Activated CD8-positive, alpha-beta T cell treated with anti-CD3 and anti-CD28 coated beads for 36 hours (primary cell): ENCODE measurements at regions of chr12 and their contacts with region 1.

Region 1: GRCh38 chr12:92145731-92146496 is at the start of gene BTG1:
- DNase-seq: peak; percentile 99
- ATAC-seq: peak; percentile 83
- H3K4me3 Mint-ChIP-seq: peak within 1 kb of the TSS; percentile 97
- H3K27ac Mint-ChIP-seq: peak within 1 kb of the TSS; percentile 95
- H3K4me1 Mint-ChIP-seq: peaks cover 21% of the 10 kb centered on the region
- H3K27me3 Mint-ChIP-seq: no peaks in the 10 kb centered on the region
- CTCF ChIP-seq: no peak
- total RNA-seq, gene BTG1: 197 to 200 TPM

Region 2: DNA sequence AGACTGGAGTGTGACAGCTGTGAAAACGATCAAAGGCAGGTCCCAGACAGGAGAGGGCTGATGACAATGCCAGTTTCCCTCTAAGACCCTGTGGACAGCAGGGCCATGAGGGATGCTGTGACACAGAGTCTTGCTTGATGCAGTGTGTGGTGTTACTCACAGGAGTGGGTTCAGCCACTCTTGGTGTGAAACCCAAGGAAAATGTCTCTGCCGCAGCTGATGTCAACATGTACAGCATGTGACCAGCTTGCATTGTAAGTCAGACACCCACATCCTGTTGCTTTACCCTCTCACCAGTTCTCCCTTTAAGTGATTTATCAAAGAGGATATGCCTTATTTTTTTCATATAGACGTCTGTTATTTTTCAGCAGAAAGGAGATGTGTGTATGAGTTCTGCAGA is 268.9 kb before region 1 on chr12:
- CTCF ChIA-PET with region 1: no interaction called
- POLR2A ChIA-PET with region 1: interaction called, 26 read pairs
- intact Hi-C with region 1: no loop called
- DNase-seq: peak; percentile 93
- ATAC-seq: peak; percentile 94
- H3K4me3 Mint-ChIP-seq: peak overlapping the region; percentile 63
- H3K27ac Mint-ChIP-seq: peak overlapping the region; percentile 99
- H3K4me1 Mint-ChIP-seq: peaks cover 63% of the 10 kb centered on the region
- H3K27me3 Mint-ChIP-seq: no peaks in the 10 kb centered on the region
- CTCF ChIP-seq: no peak

Region 3: GRCh38 chr12:91902860-91903683 is 242.8 kb before region 1 on chr12:
- CTCF ChIA-PET with region 1: no interaction called
- POLR2A ChIA-PET with region 1: no interaction called
- intact Hi-C with region 1: no loop called
- DNase-seq: no peak
- ATAC-seq: peak; percentile 53
- H3K4me3 Mint-ChIP-seq: no peak overlapping the region
- H3K27ac Mint-ChIP-seq: peak overlapping the region; percentile 13
- H3K4me1 Mint-ChIP-seq: peaks cover 20% of the 10 kb centered on the region
- H3K27me3 Mint-ChIP-seq: no peaks in the 10 kb centered on the region
- CTCF ChIP-seq: no peak

Region 4: DNA sequence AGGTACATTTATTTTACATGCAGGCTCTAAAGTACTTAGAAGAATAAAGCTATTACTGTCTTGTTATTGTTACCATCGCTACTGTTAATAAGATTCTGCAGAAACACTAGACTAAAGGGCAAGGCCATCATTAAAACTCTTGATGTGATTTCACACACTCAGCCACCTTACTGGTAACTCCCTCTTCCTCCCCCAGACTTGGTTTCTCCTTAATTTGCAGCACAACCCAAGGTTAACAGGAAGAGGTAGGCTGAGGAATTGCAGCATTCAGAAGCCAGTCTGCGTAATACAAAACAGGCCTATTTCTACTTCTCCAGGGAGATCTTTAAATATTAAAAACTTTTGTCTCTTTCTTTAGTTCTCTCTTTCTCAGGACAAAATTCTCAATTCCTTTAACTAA is 210.6 kb before region 1 on chr12:
- CTCF ChIA-PET with region 1: no interaction called
- POLR2A ChIA-PET with region 1: no interaction called
- intact Hi-C with region 1: no loop called
- DNase-seq: no peak
- ATAC-seq: no peak
- H3K4me3 Mint-ChIP-seq: no peak overlapping the region
- H3K27ac Mint-ChIP-seq: no peak overlapping the region
- H3K4me1 Mint-ChIP-seq: peaks cover 6% of the 10 kb centered on the region
- H3K27me3 Mint-ChIP-seq: no peaks in the 10 kb centered on the region
- CTCF ChIP-seq: no peak

Region 5: DNA sequence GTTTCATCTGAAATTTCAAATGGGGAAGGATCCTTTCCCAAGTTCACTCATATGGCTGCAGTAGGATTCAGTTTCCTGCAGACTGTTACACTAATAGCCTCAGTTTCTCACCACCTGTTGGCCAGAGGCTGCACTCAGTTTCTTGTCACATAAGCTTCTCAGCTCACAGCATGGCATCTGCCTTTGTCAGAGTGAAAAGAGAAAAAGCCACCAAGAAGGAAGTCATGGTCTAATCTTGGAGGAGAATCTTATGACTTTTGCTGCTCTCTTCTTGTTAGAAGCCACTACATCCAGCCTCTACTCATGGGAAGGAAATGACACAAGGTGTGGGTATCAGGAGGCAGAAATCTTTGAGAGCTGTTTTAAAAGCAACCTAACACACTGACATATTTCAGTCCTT is 39.1 kb after region 1 on chr12:
- CTCF ChIA-PET with region 1: no interaction called
- POLR2A ChIA-PET with region 1: interaction called, 4 read pairs
- intact Hi-C with region 1: loop called (anchors 5 kb)
- DNase-seq: peak; percentile 55
- ATAC-seq: peak; percentile 86
- H3K4me3 Mint-ChIP-seq: peak overlapping the region; percentile 26
- H3K27ac Mint-ChIP-seq: peak overlapping the region; percentile 93
- H3K4me1 Mint-ChIP-seq: peaks cover 52% of the 10 kb centered on the region
- H3K27me3 Mint-ChIP-seq: no peaks in the 10 kb centered on the region
- CTCF ChIP-seq: no peak

Region 6: DNA sequence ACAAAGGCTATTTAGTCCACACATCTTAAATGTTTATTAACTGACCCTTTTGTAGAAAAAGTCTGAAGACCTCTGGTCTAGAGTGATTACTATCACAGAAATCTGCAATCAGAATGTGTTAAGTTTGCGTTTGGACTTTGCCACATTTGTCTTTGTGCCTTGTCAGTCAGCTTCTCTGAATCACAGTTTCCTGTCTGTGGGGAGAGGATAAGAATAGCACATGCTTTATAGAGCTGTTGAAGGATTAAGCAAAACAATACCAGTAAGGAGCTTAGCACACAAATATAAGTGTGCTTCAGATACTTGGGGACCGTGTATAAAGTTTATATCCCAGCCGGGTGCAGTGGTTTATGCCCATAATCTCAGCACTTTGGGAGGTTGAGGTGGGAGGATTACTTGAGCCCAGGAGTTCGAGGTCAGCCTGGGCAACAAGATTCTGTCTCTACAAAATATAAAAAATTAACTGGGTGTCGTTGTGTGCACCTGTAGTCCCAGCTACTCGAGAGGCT is 62.8 kb after region 1 on chr12:
- CTCF ChIA-PET with region 1: interaction called, 7 read pairs
- POLR2A ChIA-PET with region 1: interaction called, 7 read pairs
- intact Hi-C with region 1: loop called (anchors 2 kb)
- DNase-seq: peak; percentile 39
- ATAC-seq: peak; percentile 65
- H3K4me3 Mint-ChIP-seq: peak overlapping the region; percentile 67
- H3K27ac Mint-ChIP-seq: peak overlapping the region; percentile 96
- H3K4me1 Mint-ChIP-seq: peaks cover 33% of the 10 kb centered on the region
- H3K27me3 Mint-ChIP-seq: no peaks in the 10 kb centered on the region
- CTCF ChIP-seq: no peak

Region 7: DNA sequence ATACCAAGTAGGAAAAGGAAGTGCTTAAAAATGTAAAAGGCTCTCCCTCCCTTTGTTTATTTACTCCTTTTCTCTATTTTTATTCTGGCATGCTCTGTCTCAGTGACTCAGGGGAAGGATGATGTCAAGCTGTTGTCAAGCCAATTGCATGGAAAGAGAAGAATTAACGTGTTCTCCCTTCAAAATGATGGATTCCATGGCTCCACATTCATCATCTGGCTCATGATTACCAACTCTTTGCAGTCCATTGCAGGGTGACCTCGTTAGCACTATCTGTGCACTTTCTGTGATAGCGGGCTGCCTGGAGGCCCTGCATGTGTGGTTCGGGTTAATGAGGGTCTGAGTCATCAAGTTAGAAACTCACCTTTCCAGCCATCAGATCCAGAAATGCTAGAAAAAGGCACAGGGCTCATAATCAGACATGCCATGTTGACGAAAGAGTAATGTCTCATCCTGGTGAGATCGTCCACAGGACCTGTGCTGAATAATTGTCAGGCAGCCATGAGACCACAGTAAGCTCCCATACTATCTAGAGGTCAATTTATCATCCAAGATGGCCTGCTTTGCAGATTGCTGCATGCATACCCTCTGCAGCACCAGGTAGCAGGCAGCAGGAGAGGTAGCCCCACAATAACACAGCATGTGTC is 78.9 kb after region 1 on chr12:
- CTCF ChIA-PET with region 1: no interaction called
- POLR2A ChIA-PET with region 1: no interaction called
- intact Hi-C with region 1: no loop called
- DNase-seq: peak; percentile 21
- ATAC-seq: peak; percentile 66
- H3K4me3 Mint-ChIP-seq: no peak overlapping the region
- H3K27ac Mint-ChIP-seq: no peak overlapping the region
- H3K4me1 Mint-ChIP-seq: peaks cover 12% of the 10 kb centered on the region
- H3K27me3 Mint-ChIP-seq: no peaks in the 10 kb centered on the region
- CTCF ChIP-seq: no peak

Region 8: GRCh38 chr12:92396647-92397252 is 250.8 kb after region 1 on chr12:
- CTCF ChIA-PET with region 1: interaction called, 3 read pairs
- POLR2A ChIA-PET with region 1: interaction called, 88 read pairs
- intact Hi-C with region 1: no loop called
- DNase-seq: no peak
- ATAC-seq: no peak
- H3K4me3 Mint-ChIP-seq: no peak overlapping the region
- H3K27ac Mint-ChIP-seq: peak overlapping the region; percentile 95
- H3K4me1 Mint-ChIP-seq: peaks cover 90% of the 10 kb centered on the region
- H3K27me3 Mint-ChIP-seq: no peaks in the 10 kb centered on the region
- CTCF ChIP-seq: no peak

Region 9: GRCh38 chr12:92505254-92506231 is 359.6 kb after region 1 on chr12:
- CTCF ChIA-PET with region 1: no interaction called
- POLR2A ChIA-PET with region 1: interaction called, 14 read pairs
- intact Hi-C with region 1: no loop called
- DNase-seq: peak; percentile 72
- ATAC-seq: peak; percentile 63
- H3K4me3 Mint-ChIP-seq: peak overlapping the region; percentile 73
- H3K27ac Mint-ChIP-seq: peak overlapping the region; percentile 97
- H3K4me1 Mint-ChIP-seq: peaks cover 53% of the 10 kb centered on the region
- H3K27me3 Mint-ChIP-seq: no peaks in the 10 kb centered on the region
- CTCF ChIP-seq: no peak

Region 10: DNA sequence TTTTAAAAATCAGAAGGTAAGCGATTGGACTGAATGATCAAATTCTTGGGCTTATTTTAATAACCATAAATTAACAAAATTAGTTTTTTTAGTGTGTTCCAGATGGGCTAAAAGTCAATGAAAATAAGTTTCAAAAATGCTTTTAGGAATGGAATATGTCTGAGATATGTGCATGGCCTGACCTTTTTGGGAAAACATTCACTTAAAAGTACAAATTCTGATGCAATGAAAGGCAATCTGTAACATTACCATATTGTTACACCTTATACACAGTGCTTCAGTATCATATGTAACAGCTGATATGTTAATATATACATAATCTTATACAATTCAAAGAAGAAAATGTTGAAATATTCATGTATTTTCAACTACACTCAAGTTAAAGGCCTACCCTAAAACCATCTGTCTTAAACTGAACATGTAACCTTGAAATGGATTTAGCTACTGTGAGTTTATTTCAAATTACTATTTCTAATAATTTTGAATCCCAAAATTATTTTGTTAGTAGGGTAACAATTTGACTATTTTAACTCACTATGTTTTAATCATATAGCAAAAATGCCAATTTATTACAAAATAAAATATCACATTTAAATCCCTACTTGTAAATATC is 698.3 kb after region 1 on chr12:
- CTCF ChIA-PET with region 1: no interaction called
- POLR2A ChIA-PET with region 1: no interaction called
- intact Hi-C with region 1: no loop called
- DNase-seq: no peak
- ATAC-seq: no peak
- H3K4me3 Mint-ChIP-seq: no peak overlapping the region
- H3K27ac Mint-ChIP-seq: no peak overlapping the region
- H3K4me1 Mint-ChIP-seq: peaks cover 1% of the 10 kb centered on the region
- H3K27me3 Mint-ChIP-seq: no peaks in the 10 kb centered on the region
- CTCF ChIP-seq: no peak